ENCODE measurements at regions of chr18 and their contacts with region 1.

Region 1: GRCh38 chr18:62522504-62523254 is at the start of gene ZCCHC2:
- DNase-seq: peak; percentile 99
- ATAC-seq: peak; percentile 92
- total RNA-seq, gene ZCCHC2: 18.2 TPM

Region 2: GRCh38 chr18:62186774-62187542 is 335.7 kb before region 1 on chr18 and contains the starts of genes PIGN and RELCH:
- intact Hi-C with region 1: loop called (anchors 1 kb)
- DNase-seq: peak; percentile 95
- ATAC-seq: peak; percentile 99
- total RNA-seq, gene PIGN: 21.0 TPM
- total RNA-seq, gene RELCH: 11.1 TPM

Region 3: GRCh38 chr18:62324917-62325805 is 197.5 kb before region 1 on chr18 and contains the start of gene TNFRSF11A:
- intact Hi-C with region 1: loop called (anchors 5 kb)
- DNase-seq: no peak
- ATAC-seq: peak; percentile 57
- total RNA-seq, gene TNFRSF11A: 1.1 TPM

Region 4: GRCh38 chr18:62425465-62426195 is 97.0 kb before region 1 on chr18:
- intact Hi-C with region 1: loop called (anchors 1 kb)
- DNase-seq: no peak
- ATAC-seq: peak; percentile 93

Region 5: GRCh38 chr18:62450546-62451406 is 71.9 kb before region 1 on chr18:
- intact Hi-C with region 1: loop called (anchors 5 kb)
- DNase-seq: peak; percentile 79
- ATAC-seq: peak; percentile 83

Region 6: DNA sequence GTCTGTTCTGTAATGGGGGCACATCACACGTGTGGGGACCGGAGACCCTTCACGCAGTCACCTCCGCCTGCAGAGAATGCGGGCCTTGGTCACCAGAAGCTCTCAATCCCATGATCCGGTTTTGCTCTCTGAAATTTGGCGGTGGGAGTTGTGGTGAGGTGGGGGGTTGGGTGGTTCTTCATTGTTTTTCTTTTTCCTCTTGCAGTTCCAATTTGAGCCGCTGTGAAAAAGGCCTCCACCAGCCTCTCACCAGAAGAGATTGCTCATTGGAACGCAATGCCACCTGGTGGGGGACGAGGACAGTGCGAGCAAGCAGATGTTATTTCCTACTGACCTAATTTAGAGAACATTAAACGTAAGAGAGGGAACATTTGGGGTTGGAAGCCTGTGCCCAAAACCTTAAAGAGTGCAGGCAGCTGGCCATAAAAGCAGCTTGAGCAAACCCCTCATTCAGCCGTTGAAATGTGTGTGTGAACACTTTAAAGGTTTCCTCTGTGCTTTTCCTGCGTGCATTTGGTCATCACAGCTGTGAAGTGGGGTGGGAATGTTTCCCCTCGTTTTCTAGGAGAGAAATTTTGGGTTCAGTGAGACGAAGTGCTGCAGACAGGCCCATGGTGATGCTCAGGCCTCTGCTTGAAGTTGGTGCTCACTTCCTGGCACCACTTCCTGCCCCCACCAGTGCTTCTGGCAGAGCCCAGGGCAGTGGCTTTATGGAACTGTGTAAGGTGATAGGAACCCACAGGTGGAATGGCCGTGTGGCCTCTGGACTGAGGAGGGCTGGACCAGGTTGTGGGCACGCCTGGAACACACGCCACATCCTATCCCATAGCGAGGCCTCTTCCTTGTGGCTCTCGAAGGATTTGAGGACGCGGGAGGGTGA is 61.8 kb after region 1 on chr18:
- intact Hi-C with region 1: loop called (anchors 5 kb)
- DNase-seq: peak; percentile 89
- ATAC-seq: peak; percentile 88